CD8-positive, alpha-beta memory T cell (primary cell): ENCODE measurements at regions of chr6 and their contacts with region 1.

Region 1: GRCh38 chr6:127918506-127919427 is 17.9 kb upstream of the THEMIS start:
- DNase-seq: peak in 3 of 5 donors; percentile 49 to 80 (median 62)
- H3K4me3 ChIP-seq: peak overlapping the region; percentile 61
- H3K4me3 Mint-ChIP-seq: peak overlapping the region; percentile 92 to 99 (median 96)
- H3K27ac ChIP-seq: peak overlapping the region; percentile 7
- H3K27ac Mint-ChIP-seq: peak overlapping the region; percentile 77 to 98 (median 90)
- H3K4me1 ChIP-seq: peaks cover 65% of the 10 kb centered on the region
- H3K4me1 Mint-ChIP-seq: peaks cover 80 to 84% (median 81%) of the 10 kb centered on the region in 3 donors
- H3K27me3 ChIP-seq: no peaks in the 10 kb centered on the region
- H3K27me3 Mint-ChIP-seq: no peaks in the 10 kb centered on the region

Region 2: GRCh38 chr6:127907960-127908640 is 10.7 kb before region 1 on chr6:
- CTCF ChIA-PET with region 1: interaction called, 5 read pairs
- POLR2A ChIA-PET with region 1: interaction called, 39 read pairs
- DNase-seq: peak in 2 of 5 donors; percentile 22 to 52
- H3K4me3 ChIP-seq: peak overlapping the region; percentile 52
- H3K4me3 Mint-ChIP-seq: peak overlapping the region; percentile 85 to 92 (median 89)
- H3K27ac ChIP-seq: peak overlapping the region; percentile 74
- H3K27ac Mint-ChIP-seq: peak overlapping the region; percentile 92 to 99 (median 95)
- H3K4me1 ChIP-seq: peaks cover 21% of the 10 kb centered on the region
- H3K4me1 Mint-ChIP-seq: peaks cover 62 to 88% (median 80%) of the 10 kb centered on the region in 3 donors
- H3K27me3 ChIP-seq: no peaks in the 10 kb centered on the region
- H3K27me3 Mint-ChIP-seq: no peaks in the 10 kb centered on the region

Region 3: GRCh38 chr6:127938701-127939100 is 19.9 kb after region 1 on chr6:
- CTCF ChIA-PET with region 1: interaction called, 15 read pairs
- POLR2A ChIA-PET with region 1: interaction called, 18 read pairs
- DNase-seq: peak in 1 of 5 donors; percentile 20
- H3K4me3 ChIP-seq: no peak overlapping the region
- H3K4me3 Mint-ChIP-seq: peak overlapping the region in 4 of 7 donors; percentile 16 to 58 (median 32)
- H3K27ac ChIP-seq: peak overlapping the region; percentile 18
- H3K27ac Mint-ChIP-seq: peak overlapping the region in 7 of 8 donors; percentile 10 to 87 (median 27)
- H3K4me1 ChIP-seq: peaks cover 33% of the 10 kb centered on the region
- H3K4me1 Mint-ChIP-seq: peaks cover 50 to 66% (median 55%) of the 10 kb centered on the region in 3 donors
- H3K27me3 ChIP-seq: no peaks in the 10 kb centered on the region
- H3K27me3 Mint-ChIP-seq: no peaks in the 10 kb centered on the region

Region 4: GRCh38 chr6:127971945-127972391 is 53.2 kb after region 1 on chr6:
- CTCF ChIA-PET with region 1: interaction called, 10 read pairs
- POLR2A ChIA-PET with region 1: interaction called, 5 read pairs
- DNase-seq: peak; percentile 26 to 84 (median 77)
- H3K4me3 ChIP-seq: peak overlapping the region; percentile 61
- H3K4me3 Mint-ChIP-seq: peak overlapping the region; percentile 87 to 94 (median 90)
- H3K27ac ChIP-seq: peak overlapping the region; percentile 62
- H3K27ac Mint-ChIP-seq: peak overlapping the region; percentile 88 to 99 (median 96)
- H3K4me1 ChIP-seq: peaks cover 65% of the 10 kb centered on the region
- H3K4me1 Mint-ChIP-seq: peaks cover 67 to 92% (median 83%) of the 10 kb centered on the region in 3 donors
- H3K27me3 ChIP-seq: no peaks in the 10 kb centered on the region
- H3K27me3 Mint-ChIP-seq: peaks cover 0 to 1% of the 10 kb centered on the region in 2 donors